Activated B cell treated with CpG ODN at 0.5 μM for 24 hours (primary cell): ENCODE measurements at regions of chr7 and their contacts with region 1.

Region 1: GRCh38 chr7:30214651-30215137 is 69.7 kb upstream of the ZNRF2 start:
- DNase-seq: no peak
- ATAC-seq: peak; percentile 31
- H3K4me3 Mint-ChIP-seq: no peak overlapping the region
- H3K27ac Mint-ChIP-seq: no peak overlapping the region
- H3K4me1 Mint-ChIP-seq: peaks cover 20% of the 10 kb centered on the region
- H3K27me3 Mint-ChIP-seq: no peaks in the 10 kb centered on the region
- CTCF ChIP-seq: no peak

Region 2: DNA sequence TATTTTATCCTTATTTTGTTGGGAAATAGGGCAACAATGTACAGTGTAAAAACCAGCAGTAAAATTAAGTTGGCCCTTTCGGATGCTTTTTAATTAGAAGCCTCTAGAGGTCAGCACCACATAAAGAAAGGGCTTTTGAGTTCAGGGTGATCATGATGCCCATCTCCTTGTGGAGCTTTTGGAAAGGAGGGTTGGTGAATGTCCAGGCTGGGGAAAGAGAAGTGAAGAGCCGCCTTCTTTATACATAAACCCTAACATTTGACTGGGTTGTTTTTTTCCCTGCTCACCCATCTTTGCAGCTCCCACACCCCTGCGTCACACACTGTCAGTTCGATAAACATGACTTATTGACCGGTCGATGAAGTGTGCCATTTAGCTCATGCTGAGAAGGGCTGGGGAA is 50.1 kb before region 1 on chr7:
- CTCF ChIA-PET with region 1: no interaction called
- POLR2A ChIA-PET with region 1: no interaction called
- intact Hi-C with region 1: no loop called
- DNase-seq: no peak
- ATAC-seq: peak; percentile 49
- H3K4me3 Mint-ChIP-seq: no peak overlapping the region
- H3K27ac Mint-ChIP-seq: peak overlapping the region; percentile 38
- H3K4me1 Mint-ChIP-seq: peaks cover 39% of the 10 kb centered on the region
- H3K27me3 Mint-ChIP-seq: no peaks in the 10 kb centered on the region
- CTCF ChIP-seq: no peak

Region 3: DNA sequence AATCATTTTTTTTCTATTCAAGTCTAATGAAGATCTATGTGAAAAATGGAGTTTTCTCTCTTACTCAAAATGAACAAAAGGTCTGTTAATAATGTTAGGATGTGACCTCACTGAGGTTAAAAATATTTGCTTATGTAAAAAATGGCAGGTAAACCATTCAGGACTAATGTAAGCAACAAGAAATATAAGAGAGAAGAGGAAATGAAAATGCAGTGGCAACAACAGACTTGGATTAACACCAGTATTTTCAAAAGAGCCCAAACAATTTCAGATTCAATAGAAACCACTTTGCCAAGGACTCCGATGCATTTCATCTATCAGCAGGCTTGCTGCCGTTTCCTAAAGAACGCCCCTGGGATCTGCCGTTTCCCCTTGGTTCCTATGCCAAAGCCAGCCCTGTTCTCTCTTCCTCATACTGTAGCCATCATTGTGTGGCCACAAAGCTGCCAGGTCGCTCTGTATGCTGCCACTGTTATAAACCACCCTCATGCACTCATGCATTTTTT is 13.5 kb before region 1 on chr7:
- CTCF ChIA-PET with region 1: no interaction called
- POLR2A ChIA-PET with region 1: no interaction called
- intact Hi-C with region 1: loop called (anchors 2 kb)
- DNase-seq: no peak
- ATAC-seq: peak; percentile 81
- H3K4me3 Mint-ChIP-seq: peak overlapping the region; percentile 42
- H3K27ac Mint-ChIP-seq: peak overlapping the region; percentile 77
- H3K4me1 Mint-ChIP-seq: peaks cover 24% of the 10 kb centered on the region
- H3K27me3 Mint-ChIP-seq: no peaks in the 10 kb centered on the region
- CTCF ChIP-seq: no peak

Region 4: DNA sequence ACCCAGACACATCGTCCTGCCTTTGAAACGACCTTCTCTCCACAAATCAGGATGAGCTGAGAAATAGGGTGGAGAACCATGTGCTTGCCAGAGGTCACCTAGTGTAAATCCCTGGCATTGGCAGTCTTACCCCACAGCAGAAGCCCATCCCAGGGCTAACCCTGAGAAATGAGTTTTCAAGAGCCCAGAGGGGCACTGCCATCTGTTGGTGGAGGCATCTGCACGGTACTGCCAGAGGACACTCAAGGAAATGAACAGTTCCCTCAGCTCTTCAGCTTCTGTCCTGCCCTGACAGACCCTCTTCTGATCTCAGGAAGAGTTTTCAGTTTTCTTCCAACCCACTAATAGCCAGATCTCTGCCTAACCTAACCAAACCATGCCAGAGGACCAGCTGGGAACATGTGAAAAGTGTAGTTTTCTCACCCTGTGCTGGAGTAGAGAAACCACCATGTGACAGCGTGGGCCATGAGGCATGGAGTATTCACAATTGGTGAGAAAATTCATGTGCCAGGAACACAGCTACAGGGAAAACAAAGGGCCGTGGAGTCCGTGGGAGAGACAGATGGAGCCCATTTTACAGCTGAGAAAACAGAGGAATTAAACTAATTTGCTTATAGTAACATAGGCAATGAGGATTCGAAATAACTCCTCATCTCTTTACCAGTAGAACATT is 1261.5 kb after region 1 on chr7:
- CTCF ChIA-PET with region 1: no interaction called
- POLR2A ChIA-PET with region 1: no interaction called
- intact Hi-C with region 1: no loop called
- DNase-seq: no peak
- ATAC-seq: no peak
- H3K4me3 Mint-ChIP-seq: no peak overlapping the region
- H3K27ac Mint-ChIP-seq: no peak overlapping the region
- H3K4me1 Mint-ChIP-seq: peaks cover 9% of the 10 kb centered on the region
- H3K27me3 Mint-ChIP-seq: peaks cover 2% of the 10 kb centered on the region
- CTCF ChIP-seq: no peak